GM10248 (cell line): ENCODE measurements at regions of chr5 and their contacts with region 1.

Region 1: DNA sequence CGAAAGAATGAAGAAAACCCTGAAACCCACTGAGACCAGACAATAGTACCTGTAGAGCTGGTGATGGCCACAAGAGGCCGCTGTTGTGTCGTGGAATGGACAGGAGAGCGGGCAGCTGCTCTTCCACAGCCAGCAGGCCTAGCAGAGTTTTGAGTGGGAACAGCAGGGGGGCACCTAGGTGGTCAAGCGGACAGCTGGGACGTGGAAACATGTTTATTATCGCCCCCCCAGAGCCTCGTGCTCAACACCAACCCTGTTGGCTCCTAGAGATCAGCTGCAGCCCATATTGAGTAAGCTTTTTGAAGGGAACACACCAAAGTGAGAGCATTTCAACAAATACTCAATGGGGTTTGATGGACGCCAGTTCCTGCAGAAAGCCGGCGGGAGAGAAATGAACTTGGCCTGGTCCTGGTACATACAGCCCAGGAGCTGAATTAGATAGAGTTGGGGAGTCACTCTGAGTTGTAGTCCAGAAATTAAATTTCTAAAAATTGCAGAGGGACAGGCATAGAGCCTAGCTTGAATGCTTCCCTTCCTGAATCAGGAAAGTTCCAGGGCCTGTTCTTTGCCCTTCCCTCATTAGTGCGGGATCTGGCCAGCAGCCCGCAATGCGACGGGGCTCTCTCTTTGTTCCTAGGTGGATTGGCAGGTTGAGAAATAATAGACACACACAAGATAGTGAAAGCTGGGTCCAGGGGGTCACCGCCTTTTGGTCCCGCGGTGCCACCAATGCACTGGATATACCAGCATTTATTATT is 33.8 kb downstream of the MFAP3 start:
- DNase-seq: peak; percentile 86
- CTCF ChIP-seq: peak; percentile 88

Region 2: DNA sequence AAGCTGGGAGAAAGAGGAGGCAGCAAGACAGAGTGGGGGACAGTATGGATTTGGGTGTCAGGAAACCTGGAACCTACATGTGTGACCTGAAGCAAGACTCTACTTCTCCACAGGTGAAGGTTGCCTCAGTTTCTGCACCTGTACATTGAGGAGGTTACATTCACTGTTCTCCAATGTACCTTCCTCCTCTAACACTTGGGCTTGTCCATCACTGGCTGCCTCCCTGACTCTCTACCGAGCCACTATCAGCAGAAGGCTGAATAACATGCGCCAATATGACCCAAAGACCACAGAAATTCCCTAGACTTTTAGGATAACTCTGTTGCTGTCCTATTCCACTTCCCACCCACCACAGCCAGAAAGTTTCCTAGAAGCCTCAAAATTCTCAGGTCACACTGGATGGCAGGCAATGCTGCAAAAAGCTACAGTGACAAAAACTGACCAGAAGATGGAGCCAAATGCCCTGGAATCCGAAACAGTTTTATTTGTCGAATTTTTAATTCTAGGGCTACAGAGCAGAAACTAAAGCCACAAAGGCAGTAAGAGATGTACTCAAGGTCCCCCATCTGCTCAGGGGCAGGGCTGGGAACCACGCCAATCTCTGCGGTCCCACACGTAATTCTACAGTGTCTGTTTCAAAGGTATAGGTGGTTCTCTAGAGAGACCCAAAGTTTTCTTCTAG is 98.3 kb before region 1 on chr5:
- CTCF ChIA-PET with region 1: interaction called, 11 read pairs
- POLR2A ChIA-PET with region 1: no interaction called
- DNase-seq: peak; percentile 66
- CTCF ChIP-seq: peak; percentile 79

Region 3: DNA sequence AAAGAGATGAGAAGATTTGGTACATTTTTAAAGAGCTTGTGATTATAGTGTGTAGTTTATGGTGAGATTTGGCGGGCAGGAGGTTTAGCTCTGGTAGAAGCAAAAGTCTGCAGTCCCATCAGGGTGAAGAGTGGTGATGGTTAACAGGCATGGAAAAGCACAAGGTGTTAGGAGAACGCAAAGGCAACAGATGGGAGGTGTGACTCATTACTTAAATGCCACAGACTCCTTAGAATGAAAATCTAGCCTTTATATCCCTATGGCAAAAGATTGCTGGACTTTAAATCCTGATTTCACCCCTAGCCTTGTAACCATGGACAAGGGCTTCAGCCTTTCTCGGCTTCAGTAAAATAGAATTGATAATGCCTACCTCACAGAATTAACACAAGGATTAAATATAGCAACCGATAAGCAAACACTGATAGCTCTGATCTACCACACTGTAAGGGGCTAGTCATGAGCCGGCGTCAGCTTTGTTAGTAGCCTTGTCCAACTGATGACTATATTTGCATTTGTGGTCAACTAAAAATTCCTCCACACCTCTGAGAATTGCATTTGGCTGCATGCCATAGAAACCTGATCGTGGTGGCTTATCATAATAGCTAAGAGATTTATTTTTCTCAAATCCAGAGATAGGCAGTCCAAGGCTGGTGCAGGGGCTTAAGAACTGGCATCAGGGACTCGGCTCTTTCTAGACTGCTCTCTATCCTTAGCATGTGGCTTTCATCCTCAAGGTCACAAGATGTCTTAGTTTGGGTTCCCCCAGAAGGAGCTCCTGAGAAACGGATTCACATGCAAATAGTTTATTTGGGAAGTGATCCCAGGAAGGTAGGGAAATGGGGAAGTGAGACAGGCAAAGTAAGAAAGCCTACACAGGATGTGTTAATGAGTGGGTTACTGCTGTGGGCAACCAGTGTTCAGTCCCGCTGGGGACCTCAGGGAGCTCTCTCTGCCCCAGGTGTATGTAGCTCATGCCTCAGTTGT is 14.2 kb before region 1 on chr5:
- CTCF ChIA-PET with region 1: interaction called, 64 read pairs
- POLR2A ChIA-PET with region 1: no interaction called
- DNase-seq: no peak
- CTCF ChIP-seq: no peak

Region 4: GRCh38 chr5:154087257-154087656 is 14.7 kb after region 1 on chr5:
- CTCF ChIA-PET with region 1: interaction called, 22 read pairs
- POLR2A ChIA-PET with region 1: no interaction called
- DNase-seq: no peak
- CTCF ChIP-seq: no peak

Region 5: GRCh38 chr5:154179846-154180710 is 107.5 kb after region 1 on chr5:
- CTCF ChIA-PET with region 1: interaction called, 17 read pairs
- POLR2A ChIA-PET with region 1: no interaction called
- DNase-seq: peak; percentile 73
- CTCF ChIP-seq: peak; percentile 72

Region 6: GRCh38 chr5:154189819-154190594 is 117.4 kb after region 1 on chr5:
- CTCF ChIA-PET with region 1: interaction called, 23 read pairs
- POLR2A ChIA-PET with region 1: no interaction called
- DNase-seq: peak; percentile 90
- CTCF ChIP-seq: peak; percentile 26

Region 7: GRCh38 chr5:154421868-154422267 is 349.3 kb after region 1 on chr5:
- CTCF ChIA-PET with region 1: interaction called, 17 read pairs
- POLR2A ChIA-PET with region 1: no interaction called
- DNase-seq: no peak
- CTCF ChIP-seq: peak; percentile 43